Activated CD4-positive, alpha-beta memory T cell treated with anti-CD3 and anti-CD28 coated beads, Interleukin-2, amount 10 ng/mL, durations not matched to agents 7 days and 5 days (primary cell): ENCODE measurements at regions of chr1 and their contacts with region 1.

Region 1: GRCh38 chr1:224113918-224114786 is at the start of gene FBXO28:
- DNase-seq: peak; percentile 94
- H3K4me3 Mint-ChIP-seq: peak within 1 kb of the TSS; percentile 90
- H3K27ac Mint-ChIP-seq: peak within 1 kb of the TSS; percentile 89
- H3K4me1 Mint-ChIP-seq: peaks cover 31% of the 10 kb centered on the region
- H3K27me3 Mint-ChIP-seq: peaks cover 9% of the 10 kb centered on the region
- total RNA-seq, gene FBXO28: 25.5 to 30.6 TPM

Region 2: GRCh38 chr1:224266105-224266935 is 152.2 kb after region 1 on chr1:
- CTCF ChIA-PET with region 1: no interaction called
- POLR2A ChIA-PET with region 1: no interaction called
- DNase-seq: no peak
- H3K4me3 Mint-ChIP-seq: no peak overlapping the region
- H3K27ac Mint-ChIP-seq: peak overlapping the region; percentile 73
- H3K4me1 Mint-ChIP-seq: peaks cover 61% of the 10 kb centered on the region
- H3K27me3 Mint-ChIP-seq: no peaks in the 10 kb centered on the region

Region 3: GRCh38 chr1:224329842-224330753 is 215.9 kb after region 1 on chr1 and contains the start of gene NVL:
- CTCF ChIA-PET with region 1: interaction called, 54 read pairs
- POLR2A ChIA-PET with region 1: interaction called, 10 read pairs
- DNase-seq: peak; percentile 83
- H3K4me3 Mint-ChIP-seq: peak within 1 kb of the TSS; percentile 88
- H3K27ac Mint-ChIP-seq: peak within 1 kb of the TSS; percentile 94
- H3K4me1 Mint-ChIP-seq: peaks cover 58% of the 10 kb centered on the region
- H3K27me3 Mint-ChIP-seq: no peaks in the 10 kb centered on the region
- total RNA-seq, gene NVL: 38.8 to 45.6 TPM